Right cardiac atrium (tissue), 5 donors: ENCODE measurements at regions of chr3 and their contacts with region 1.

Region 1: DNA sequence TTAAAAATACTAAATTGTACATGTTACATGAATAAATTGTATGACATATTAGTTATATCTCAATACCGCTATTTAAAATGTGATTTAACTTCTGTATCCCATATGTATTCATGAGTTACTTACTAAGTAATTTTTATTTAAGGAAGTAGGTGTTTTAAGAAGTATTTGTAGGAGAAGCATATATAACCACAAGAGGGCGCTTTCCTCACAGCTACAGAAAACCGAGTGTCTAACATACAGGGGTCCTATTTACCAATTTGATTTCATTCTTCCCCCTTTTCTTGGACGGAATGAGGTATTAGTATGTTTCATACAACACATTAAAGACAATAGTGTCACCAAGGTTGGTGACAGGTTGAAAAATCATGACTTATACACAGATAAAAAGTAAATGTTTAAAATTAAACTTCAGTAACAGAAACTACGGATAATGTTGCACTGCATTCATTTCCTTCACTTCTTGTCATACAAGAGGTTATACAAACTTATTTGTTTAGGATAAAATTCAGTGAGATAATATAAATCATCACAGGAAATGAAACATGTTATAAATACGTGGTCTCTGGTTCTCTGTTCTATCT is 253.6 kb downstream of the MAGI1 start:
- DNase-seq: no peak
- ATAC-seq: no peak
- H3K4me3 ChIP-seq: no peak overlapping the region
- H3K27ac ChIP-seq: no peak overlapping the region
- H3K4me1 ChIP-seq: peaks cover 4% of the 10 kb centered on the region
- H3K27me3 ChIP-seq: no peaks in the 10 kb centered on the region

Region 2: GRCh38 chr3:65914740-65915367 is 129.7 kb after region 1 on chr3:
- intact Hi-C with region 1: loop called in 1 of 4 experiments (anchors 10 kb)
- DNase-seq: no peak
- ATAC-seq: no peak
- H3K4me3 ChIP-seq: no peak overlapping the region
- H3K27ac ChIP-seq: no peak overlapping the region
- H3K4me1 ChIP-seq: peaks cover under 1% of the 10 kb centered on the region
- H3K27me3 ChIP-seq: no peaks in the 10 kb centered on the region

Region 3: GRCh38 chr3:66098436-66098835 is 313.3 kb after region 1 on chr3:
- intact Hi-C with region 1: no loop called
- DNase-seq: no peak
- ATAC-seq: no peak
- H3K4me3 ChIP-seq: no peak overlapping the region
- H3K27ac ChIP-seq: no peak overlapping the region
- H3K4me1 ChIP-seq: no peaks in the 10 kb centered on the region
- H3K27me3 ChIP-seq: no peaks in the 10 kb centered on the region

Region 4: DNA sequence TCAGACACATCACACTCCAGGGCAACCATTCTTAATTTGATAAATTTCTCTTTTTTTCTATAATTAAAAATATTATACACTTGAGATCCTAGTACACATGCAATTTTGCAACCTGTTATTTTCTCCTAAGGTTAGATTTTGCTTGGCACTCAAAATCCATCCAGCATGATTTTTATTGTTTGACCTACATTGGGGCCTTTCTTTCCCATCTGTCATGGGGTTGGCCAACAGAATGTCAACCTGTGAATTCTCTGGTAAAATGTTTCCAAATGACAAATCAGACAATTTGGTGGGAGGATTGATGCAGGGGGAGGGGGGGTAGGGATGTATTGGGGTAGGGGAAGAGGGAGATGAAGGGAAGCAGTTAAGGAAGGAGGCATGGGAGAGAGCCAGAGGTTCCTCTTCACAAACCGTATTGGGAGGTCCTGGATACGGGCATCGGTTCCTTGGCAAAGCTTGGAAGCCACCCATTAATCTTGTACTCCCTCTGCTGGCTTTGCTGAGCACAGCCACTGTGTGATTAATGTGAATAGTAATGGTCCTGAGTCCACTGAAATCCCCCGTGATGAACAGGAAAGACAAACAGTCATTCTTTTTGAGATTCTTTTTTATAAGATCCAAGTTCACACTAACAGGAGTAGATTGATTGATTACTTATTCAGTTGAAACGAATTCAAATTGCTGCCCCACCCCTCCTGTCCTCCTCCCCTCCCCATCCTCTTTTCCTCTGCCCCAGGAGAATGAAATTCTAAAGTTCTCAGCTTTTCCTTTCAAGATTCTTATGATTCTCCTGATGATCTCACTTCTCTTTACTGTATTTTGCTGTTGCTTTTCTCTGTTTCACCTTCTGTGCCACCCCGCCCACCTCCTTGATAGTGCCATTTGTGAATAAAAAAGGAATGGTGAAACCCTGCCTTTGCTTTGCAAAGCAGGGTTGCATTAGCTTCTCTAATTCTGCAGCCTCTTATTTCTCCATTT is 353.5 kb after region 1 on chr3:
- intact Hi-C with region 1: loop called (anchors 2 to 10 kb)
- DNase-seq: peak; percentile 30 to 73 (median 69)
- ATAC-seq: peak; percentile 66 to 89
- H3K4me3 ChIP-seq: no peak overlapping the region
- H3K27ac ChIP-seq: no peak overlapping the region
- H3K4me1 ChIP-seq: no peaks in the 10 kb centered on the region
- H3K27me3 ChIP-seq: no peaks in the 10 kb centered on the region

Region 5: DNA sequence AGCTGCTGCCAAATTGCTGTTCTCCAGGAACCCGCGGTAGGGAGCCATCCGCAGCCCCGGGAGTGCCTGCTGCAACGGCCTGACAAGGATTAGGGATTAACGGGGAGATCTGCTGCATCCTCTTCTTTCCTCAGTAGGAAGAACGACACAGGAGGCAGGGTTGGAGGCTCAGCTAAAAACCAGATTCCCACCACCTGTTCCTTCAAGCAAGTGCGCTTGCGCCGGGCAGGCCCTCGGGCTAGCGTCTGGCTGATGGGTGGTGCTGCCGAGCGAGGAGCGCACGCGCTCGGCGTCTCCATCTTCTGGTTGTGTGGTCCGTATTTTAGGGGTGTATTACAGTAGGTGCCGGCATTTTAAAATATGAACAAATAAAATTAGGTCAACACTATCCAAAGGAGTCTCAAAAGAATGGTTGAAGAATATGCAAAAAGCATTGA is 410.2 kb after region 1 on chr3:
- intact Hi-C with region 1: loop called in 3 of 4 experiments (anchors 5 to 10 kb)
- DNase-seq: peak; percentile 66 to 86 (median 80)
- ATAC-seq: peak; percentile 66 to 69
- H3K4me3 ChIP-seq: peak overlapping the region; percentile 40
- H3K27ac ChIP-seq: peak overlapping the region; percentile 86
- H3K4me1 ChIP-seq: peaks cover 2% of the 10 kb centered on the region
- H3K27me3 ChIP-seq: no peaks in the 10 kb centered on the region